Naive thymus-derived CD4-positive, alpha-beta T cell (primary cell): ENCODE measurements at regions of chr22 and their contacts with region 1.

Region 1: GRCh38 chr22:33923660-33924246 is 3.5 kb upstream of the LARGE1 start:
- DNase-seq: no peak
- ATAC-seq: no peak
- H3K4me3 ChIP-seq: no peak overlapping the region
- H3K4me3 Mint-ChIP-seq: peak overlapping the region in 6 of 10 donors; percentile 23 to 93 (median 80)
- H3K27ac ChIP-seq: no peak overlapping the region
- H3K27ac Mint-ChIP-seq: no peak overlapping the region
- H3K4me1 ChIP-seq: peaks cover 0 to 14% of the 10 kb centered on the region in 2 donors
- H3K4me1 Mint-ChIP-seq: peaks cover 9 to 28% (median 21%) of the 10 kb centered on the region in 7 donors
- H3K27me3 ChIP-seq: peaks cover under 1 to 3% of the 10 kb centered on the region in 2 donors
- H3K27me3 Mint-ChIP-seq: peaks cover 38 to 60% (median 44%) of the 10 kb centered on the region in 5 donors

Region 2: GRCh38 chr22:34111210-34111824 is 187.6 kb after region 1 on chr22:
- CTCF ChIA-PET with region 1: interaction called, 3 read pairs
- POLR2A ChIA-PET with region 1: no interaction called
- intact Hi-C with region 1: loop called in 1 of 2 experiments (anchors 1 kb)
- DNase-seq: no peak
- ATAC-seq: no peak
- H3K4me3 ChIP-seq: no peak overlapping the region
- H3K4me3 Mint-ChIP-seq: no peak overlapping the region
- H3K27ac ChIP-seq: no peak overlapping the region
- H3K27ac Mint-ChIP-seq: no peak overlapping the region
- H3K4me1 ChIP-seq: no peaks in the 10 kb centered on the region
- H3K4me1 Mint-ChIP-seq: no peaks in the 10 kb centered on the region
- H3K27me3 ChIP-seq: no peaks in the 10 kb centered on the region
- H3K27me3 Mint-ChIP-seq: peaks cover 0 to 12% (median 7%) of the 10 kb centered on the region in 5 donors